ENCODE measurements at regions of chr11 and their contacts with region 1.

Region 1: DNA sequence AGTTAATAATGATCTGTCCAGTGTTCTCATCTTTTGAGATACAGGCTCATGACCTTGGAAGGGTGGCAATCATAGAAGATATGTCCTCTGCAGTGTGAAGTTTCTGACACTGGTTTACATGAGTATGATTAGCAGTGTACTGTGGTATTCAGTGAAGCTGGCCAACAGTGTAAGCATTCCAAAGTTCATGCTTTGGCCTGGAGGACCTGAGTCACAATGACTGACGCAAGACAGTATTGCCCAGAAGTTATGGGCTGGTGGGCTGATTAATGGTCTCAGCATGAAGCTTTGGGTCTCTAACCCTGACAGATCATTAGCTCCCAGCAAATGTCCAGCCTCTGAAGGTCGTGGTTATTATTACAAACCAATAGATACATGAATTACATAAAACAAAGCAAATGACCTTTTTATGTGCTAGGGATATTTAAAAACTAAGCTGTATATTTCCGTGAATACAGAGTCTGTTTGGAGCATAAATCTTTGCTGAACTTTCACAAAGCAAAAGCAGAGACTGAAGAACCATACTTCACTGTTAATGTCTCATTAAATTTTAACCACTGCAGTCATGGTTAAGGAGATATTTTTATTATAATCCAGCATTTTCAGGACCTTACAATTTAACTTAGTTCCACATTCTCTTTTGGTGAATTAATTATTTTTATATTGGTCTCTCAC is 28.3 kb upstream of the USP47 start:
- DNase-seq: peak; percentile 97
- H3K4me3 ChIP-seq: peak overlapping the region; percentile 38
- H3K27ac ChIP-seq: peak overlapping the region; percentile 93
- H3K4me1 ChIP-seq: peaks cover 19% of the 10 kb centered on the region
- H3K27me3 ChIP-seq: no peaks in the 10 kb centered on the region

Region 2: DNA sequence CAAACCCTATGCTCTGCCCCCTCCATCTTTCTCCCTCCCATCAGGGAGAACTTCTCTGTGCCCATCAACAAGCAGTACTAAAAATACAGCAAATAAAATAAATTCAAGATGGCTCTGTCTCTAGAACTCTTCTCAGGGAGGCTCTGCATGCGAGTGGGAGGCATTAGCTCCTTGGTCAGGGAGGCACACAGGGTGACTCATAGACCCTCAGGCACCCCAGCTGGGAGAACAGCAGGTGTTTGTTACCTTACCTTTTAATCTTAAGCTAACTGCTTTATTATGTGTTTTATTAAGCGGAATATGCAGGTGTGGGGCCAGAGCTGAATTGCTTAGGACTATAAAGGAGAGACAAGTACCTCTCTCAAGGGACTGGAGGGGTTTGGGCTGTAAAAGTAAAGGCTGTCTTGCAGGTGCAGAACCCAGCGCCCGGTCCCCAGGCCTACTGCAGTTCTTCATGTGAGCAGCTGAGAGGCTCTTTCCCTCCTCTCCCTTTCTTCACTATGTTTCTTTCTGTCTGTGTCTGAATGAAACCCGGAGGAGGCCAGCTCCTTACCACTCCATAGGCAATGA is 481.2 kb before region 1 on chr11:
- in situ Hi-C with region 1: no loop called
- DNase-seq: no peak
- H3K4me3 ChIP-seq: no peak overlapping the region
- H3K27ac ChIP-seq: no peak overlapping the region
- H3K4me1 ChIP-seq: no peaks in the 10 kb centered on the region
- H3K27me3 ChIP-seq: no peaks in the 10 kb centered on the region

Region 3: GRCh38 chr11:12269104-12269441 is 455.6 kb after region 1 on chr11:
- in situ Hi-C with region 1: loop called (anchors 25 kb)
- DNase-seq: peak; percentile 78
- H3K4me3 ChIP-seq: no peak overlapping the region
- H3K27ac ChIP-seq: peak overlapping the region; percentile 24; the same call in 1 of the 2 replicates
- H3K4me1 ChIP-seq: peaks cover 20% of the 10 kb centered on the region
- H3K27me3 ChIP-seq: no peaks in the 10 kb centered on the region